Activated T-helper 2 cell treated with anti-CD3 and anti-CD28 coated beads, Interferon-gamma antibody, Interleukin-2, Interleukin-4, amounts not matched to agents 10 μg/mL and 5 μg/mL and 100 μg/mL, durations not matched to agents 14 hours and 24 hours and 36 hours (primary cell): ENCODE measurements at regions of chr15 and their contacts with region 1.

Region 1: GRCh38 chr15:51162865-51163762 is 68.4 kb upstream of the TNFAIP8L3 start:
- DNase-seq: peak; percentile 48
- H3K4me3 Mint-ChIP-seq: peak overlapping the region; percentile 40
- H3K27ac Mint-ChIP-seq: no peak overlapping the region
- H3K4me1 Mint-ChIP-seq: peaks cover 11% of the 10 kb centered on the region
- H3K27me3 Mint-ChIP-seq: peaks cover 11% of the 10 kb centered on the region

Region 2: GRCh38 chr15:50774450-50774849 is 388.7 kb before region 1 on chr15:
- intact Hi-C with region 1: no loop called
- DNase-seq: no peak
- H3K4me3 Mint-ChIP-seq: no peak overlapping the region
- H3K27ac Mint-ChIP-seq: no peak overlapping the region
- H3K4me1 Mint-ChIP-seq: peaks cover 9% of the 10 kb centered on the region
- H3K27me3 Mint-ChIP-seq: no peaks in the 10 kb centered on the region

Region 3: DNA sequence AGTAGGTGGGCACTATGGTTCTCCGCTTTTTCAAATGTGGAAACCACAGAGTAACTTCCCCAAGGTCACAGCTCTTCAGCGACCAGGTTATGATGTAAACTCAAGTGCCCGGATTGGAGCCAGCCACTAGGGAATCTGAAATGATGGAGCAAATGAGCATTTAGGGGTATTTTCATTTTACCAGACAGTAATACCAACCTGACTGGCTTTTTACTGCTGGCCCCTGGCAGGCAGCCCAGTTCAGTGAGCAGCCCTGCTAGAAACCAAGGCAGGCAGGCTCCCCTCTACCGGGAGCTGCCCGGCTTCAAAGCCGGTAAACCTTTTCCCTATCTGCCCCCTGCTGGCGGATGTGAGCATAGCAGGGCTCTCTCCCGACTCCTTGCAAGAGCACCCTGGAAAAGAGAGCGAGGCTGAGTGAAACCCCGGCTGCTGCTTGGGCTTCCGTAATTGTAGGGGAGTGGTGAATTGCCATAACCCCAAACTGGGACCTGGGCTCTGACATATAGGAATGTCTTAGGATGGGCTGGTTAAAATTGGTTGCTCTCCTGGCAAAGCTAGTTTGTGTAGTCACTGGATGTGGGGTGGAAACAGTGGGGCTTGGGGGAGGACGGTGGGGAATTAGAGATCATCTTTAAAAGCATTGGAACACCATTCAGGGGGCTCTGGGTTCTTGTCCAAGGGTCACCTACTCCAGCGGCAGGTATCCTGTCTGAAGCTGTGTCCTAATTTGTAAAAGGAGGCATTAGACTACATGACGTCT is 29.6 kb after region 1 on chr15:
- intact Hi-C with region 1: loop called (anchors 1 kb)
- DNase-seq: peak; percentile 65
- H3K4me3 Mint-ChIP-seq: no peak overlapping the region
- H3K27ac Mint-ChIP-seq: no peak overlapping the region
- H3K4me1 Mint-ChIP-seq: peaks cover 3% of the 10 kb centered on the region
- H3K27me3 Mint-ChIP-seq: peaks cover 26% of the 10 kb centered on the region

Region 4: GRCh38 chr15:51281368-51281967 is 118.4 kb after region 1 on chr15:
- intact Hi-C with region 1: loop called (anchors 1 kb)
- DNase-seq: no peak
- H3K4me3 Mint-ChIP-seq: no peak overlapping the region
- H3K27ac Mint-ChIP-seq: peak overlapping the region; percentile 14
- H3K4me1 Mint-ChIP-seq: peaks cover 19% of the 10 kb centered on the region
- H3K27me3 Mint-ChIP-seq: peaks cover 19% of the 10 kb centered on the region

Region 5: DNA sequence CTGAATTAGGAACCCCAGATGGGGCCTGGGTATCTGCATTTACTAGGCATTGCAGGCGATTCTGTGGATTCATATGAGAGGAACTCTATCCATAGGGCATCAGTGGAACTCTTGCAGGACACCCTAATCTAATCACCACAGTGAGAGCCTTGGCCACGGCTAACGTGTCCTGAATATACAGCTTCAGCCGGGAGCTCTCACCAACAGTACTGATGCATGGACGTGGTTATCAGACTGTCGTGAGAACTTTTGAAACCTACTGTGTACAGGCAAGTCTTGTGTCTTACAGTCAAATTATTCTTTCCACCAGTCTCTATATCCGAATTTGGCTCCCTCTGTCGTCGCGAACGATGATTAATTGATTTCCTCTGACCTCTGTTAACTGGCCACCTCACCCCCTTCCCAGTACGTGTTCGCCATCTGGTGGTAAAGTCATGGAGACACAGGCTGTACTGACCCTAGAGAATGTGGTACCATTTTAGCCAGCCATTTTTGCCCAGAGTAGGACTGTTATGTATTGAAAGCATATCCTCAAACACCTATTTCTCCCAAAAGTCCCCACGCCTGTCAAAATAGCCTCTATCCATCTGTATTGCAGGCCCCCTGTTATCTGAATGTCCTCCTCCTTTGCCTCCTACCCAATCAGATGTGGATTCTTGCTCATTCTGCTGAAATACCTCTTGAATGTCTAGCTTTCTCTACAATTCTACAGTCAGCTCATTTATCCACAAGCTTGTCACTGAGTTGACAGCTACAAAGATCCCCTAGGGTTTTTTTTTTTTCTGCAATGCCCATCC is 218.1 kb after region 1 on chr15:
- intact Hi-C with region 1: loop called (anchors 1 kb)
- DNase-seq: peak; percentile 25
- H3K4me3 Mint-ChIP-seq: no peak overlapping the region
- H3K27ac Mint-ChIP-seq: no peak overlapping the region
- H3K4me1 Mint-ChIP-seq: peaks cover 6% of the 10 kb centered on the region
- H3K27me3 Mint-ChIP-seq: peaks cover 8% of the 10 kb centered on the region